ENCODE measurements at regions of chr4 and their contacts with region 1.

Region 1: DNA sequence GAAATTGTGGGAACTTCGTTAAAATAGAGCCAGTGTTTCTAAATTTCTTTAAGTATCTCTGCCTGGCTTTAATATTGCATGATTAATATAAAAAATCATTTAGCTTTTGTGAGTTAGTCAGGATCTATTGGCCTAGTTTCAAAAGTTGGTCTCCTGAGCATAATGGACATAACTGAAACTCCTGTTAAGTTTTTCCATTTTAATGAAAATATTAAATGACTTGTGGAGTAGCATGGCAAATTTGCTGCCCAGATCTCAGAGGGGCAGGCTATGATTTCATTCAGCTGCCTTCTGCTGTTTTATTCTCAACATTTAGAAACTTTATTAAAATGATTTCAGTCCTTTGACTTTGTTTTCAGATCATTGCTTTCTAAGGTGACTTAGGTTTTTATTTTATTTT is 962.9 kb upstream of the GRID2 start:
- DNase-seq: no peak
- ATAC-seq: no peak
- H3K4me3 Mint-ChIP-seq: no peak overlapping the region
- H3K27ac Mint-ChIP-seq: no peak overlapping the region
- H3K4me1 Mint-ChIP-seq: no peaks in the 10 kb centered on the region
- H3K27me3 Mint-ChIP-seq: no peaks in the 10 kb centered on the region
- CTCF ChIP-seq: no peak

Region 2: DNA sequence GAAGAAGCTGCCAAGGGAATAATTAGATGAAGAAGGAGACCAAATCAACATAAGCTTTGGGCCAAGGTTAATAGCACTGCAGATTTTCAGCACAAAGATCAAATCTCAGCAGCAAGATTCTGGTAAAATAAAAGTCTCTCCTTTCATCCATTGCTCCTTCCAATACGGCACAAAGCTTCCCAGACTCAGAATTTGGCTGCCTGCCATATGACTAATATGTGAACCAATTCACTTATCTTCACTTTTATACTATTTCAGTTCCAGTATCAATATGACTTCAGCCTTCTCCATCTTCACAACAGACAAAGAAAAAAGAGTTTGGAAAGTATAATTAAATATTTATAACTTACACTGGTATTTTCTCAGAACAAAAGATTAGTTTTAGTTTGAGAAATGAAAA is 15.3 kb before region 1 on chr4:
- CTCF ChIA-PET with region 1: no interaction called
- POLR2A ChIA-PET with region 1: no interaction called
- intact Hi-C with region 1: no loop called
- DNase-seq: no peak
- ATAC-seq: no peak
- H3K4me3 Mint-ChIP-seq: no peak overlapping the region
- H3K27ac Mint-ChIP-seq: no peak overlapping the region
- H3K4me1 Mint-ChIP-seq: no peaks in the 10 kb centered on the region
- H3K27me3 Mint-ChIP-seq: no peaks in the 10 kb centered on the region
- CTCF ChIP-seq: no peak

Region 3: GRCh38 chr4:91373546-91373945 is 32.7 kb after region 1 on chr4:
- CTCF ChIA-PET with region 1: no interaction called
- POLR2A ChIA-PET with region 1: interaction called, 12 read pairs
- intact Hi-C with region 1: no loop called
- DNase-seq: no peak
- ATAC-seq: no peak
- H3K4me3 Mint-ChIP-seq: no peak overlapping the region
- H3K27ac Mint-ChIP-seq: no peak overlapping the region
- H3K4me1 Mint-ChIP-seq: no peaks in the 10 kb centered on the region
- H3K27me3 Mint-ChIP-seq: no peaks in the 10 kb centered on the region
- CTCF ChIP-seq: no peak

Region 4: GRCh38 chr4:91990726-91991125 is 649.9 kb after region 1 on chr4:
- CTCF ChIA-PET with region 1: no interaction called
- POLR2A ChIA-PET with region 1: no interaction called
- intact Hi-C with region 1: no loop called
- DNase-seq: no peak
- ATAC-seq: no peak
- H3K4me3 Mint-ChIP-seq: no peak overlapping the region
- H3K27ac Mint-ChIP-seq: no peak overlapping the region
- H3K4me1 Mint-ChIP-seq: no peaks in the 10 kb centered on the region
- H3K27me3 Mint-ChIP-seq: no peaks in the 10 kb centered on the region
- CTCF ChIP-seq: no peak

Measured in activated B cell treated with CpG ODN at 0.5 μM for 24 hours (primary cell).